GM10248 (cell line): ENCODE measurements at regions of chr6 and their contacts with region 1.

Region 1: GRCh38 chr6:128731249-128732165 is 151.4 kb upstream of the LAMA2 start:
- DNase-seq: peak; percentile 13
- CTCF ChIP-seq: peak; percentile 37

Region 2: GRCh38 chr6:128754658-128755256 is 23.2 kb after region 1 on chr6:
- CTCF ChIA-PET with region 1: interaction called, 12 read pairs
- POLR2A ChIA-PET with region 1: no interaction called
- DNase-seq: peak; percentile 35
- CTCF ChIP-seq: no peak